ENCODE measurements at regions of chr12 and their contacts with region 1.

Region 1: GRCh38 chr12:53995378-53996239 is 4.4 kb upstream of the HOXC9 start:
- DNase-seq: no peak
- ATAC-seq: peak; percentile 37
- H3K4me3 Mint-ChIP-seq: peak overlapping the region; percentile 82
- H3K27ac Mint-ChIP-seq: no peak overlapping the region
- H3K4me1 Mint-ChIP-seq: peaks cover 34% of the 10 kb centered on the region
- H3K27me3 Mint-ChIP-seq: peaks cover 75% of the 10 kb centered on the region
- CTCF ChIP-seq: no peak

Region 2: DNA sequence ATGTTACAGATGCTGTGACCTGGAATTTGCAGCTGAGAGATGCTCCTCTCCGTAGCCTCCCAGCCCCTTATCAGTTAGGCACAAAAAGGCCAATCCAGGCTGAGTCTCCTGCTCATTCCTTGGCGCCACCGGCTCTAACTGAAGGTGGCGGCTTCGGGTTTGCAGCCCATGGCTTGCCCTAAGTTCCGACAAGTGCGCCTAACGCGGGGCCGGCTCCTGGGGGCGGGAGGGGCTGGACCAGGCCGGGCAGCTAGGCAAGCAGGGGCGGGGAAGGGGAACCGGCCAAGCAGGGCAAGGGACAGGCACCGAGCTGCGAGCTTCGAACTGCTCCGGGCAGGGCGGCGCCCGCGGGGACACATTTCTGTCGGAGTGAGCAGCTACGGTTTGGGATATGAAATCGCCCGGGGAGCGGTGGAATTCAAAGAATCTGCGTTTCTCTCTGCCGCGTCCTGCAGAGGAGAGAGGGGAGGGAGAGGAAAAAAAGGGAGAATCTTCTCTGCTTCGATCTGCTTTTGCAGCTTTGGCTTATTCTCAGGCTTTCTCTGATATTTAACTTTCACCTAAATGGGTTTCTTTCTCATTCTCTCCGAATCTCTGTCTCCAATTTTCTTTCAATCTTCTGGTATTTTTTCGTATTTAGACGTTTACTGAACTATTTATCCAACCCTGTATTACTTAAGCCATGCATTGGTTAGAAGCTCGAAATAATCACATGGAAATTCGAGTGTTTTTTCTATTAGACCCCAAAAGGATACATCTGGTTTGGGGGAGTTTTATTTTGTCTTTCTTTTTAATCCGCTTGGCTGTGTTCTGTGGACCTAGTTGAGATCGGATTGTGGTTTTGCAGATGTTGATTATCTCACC is 42.5 kb before region 1 on chr12:
- CTCF ChIA-PET with region 1: no interaction called
- POLR2A ChIA-PET with region 1: interaction called, 3 read pairs
- intact Hi-C with region 1: loop called (anchors 5 kb)
- DNase-seq: no peak
- ATAC-seq: no peak
- H3K4me3 Mint-ChIP-seq: no peak overlapping the region
- H3K27ac Mint-ChIP-seq: no peak overlapping the region
- H3K4me1 Mint-ChIP-seq: peaks cover 13% of the 10 kb centered on the region
- H3K27me3 Mint-ChIP-seq: peaks cover 71% of the 10 kb centered on the region
- CTCF ChIP-seq: no peak

Region 3: GRCh38 chr12:53974084-53975063 is 21.2 kb before region 1 on chr12 and contains the start of gene HOTAIR:
- CTCF ChIA-PET with region 1: no interaction called
- POLR2A ChIA-PET with region 1: no interaction called
- intact Hi-C with region 1: loop called (anchors 2 kb)
- DNase-seq: no peak
- ATAC-seq: peak; percentile 45
- H3K4me3 Mint-ChIP-seq: peak within 1 kb of the TSS; percentile 66
- H3K27ac Mint-ChIP-seq: peak within 1 kb of the TSS; percentile 50
- H3K4me1 Mint-ChIP-seq: peaks cover 15% of the 10 kb centered on the region
- H3K27me3 Mint-ChIP-seq: peaks cover 71% of the 10 kb centered on the region
- CTCF ChIP-seq: no peak
- total RNA-seq, gene HOTAIR: not detected in 2 replicates

Region 4: DNA sequence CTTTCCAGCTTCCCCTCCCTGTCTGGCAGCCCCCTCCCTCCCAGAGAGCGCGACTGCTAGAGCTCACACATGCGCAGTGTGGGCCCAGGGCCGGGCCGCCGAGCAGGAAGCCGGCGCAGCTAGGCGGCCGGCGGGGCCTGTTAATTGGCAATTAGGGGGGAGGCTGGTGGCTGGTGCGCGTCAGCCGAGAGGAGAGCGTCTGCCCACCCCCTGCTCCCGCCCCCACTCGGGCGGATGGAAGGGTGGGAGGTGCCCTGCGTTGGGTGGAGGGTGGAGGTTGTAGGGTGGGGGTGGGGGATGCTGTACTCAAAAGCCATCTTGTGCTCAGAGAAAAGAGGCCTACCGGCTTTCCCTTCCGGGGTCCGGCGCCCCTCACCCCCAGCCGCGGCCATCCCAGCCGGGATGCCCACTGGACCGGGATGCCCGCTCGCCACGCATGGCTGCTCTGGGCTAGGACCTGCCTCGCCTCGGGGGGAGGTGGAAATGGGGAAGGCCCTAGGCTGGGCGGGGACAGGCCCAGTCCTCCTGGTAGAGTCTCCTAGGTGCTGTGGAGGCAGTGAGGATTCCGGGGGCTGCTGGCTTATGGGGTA is 22.4 kb after region 1 on chr12:
- CTCF ChIA-PET with region 1: no interaction called
- POLR2A ChIA-PET with region 1: interaction called, 4 read pairs
- intact Hi-C with region 1: loop called (anchors 2 kb)
- DNase-seq: peak; percentile 67
- ATAC-seq: peak; percentile 88
- H3K4me3 Mint-ChIP-seq: peak overlapping the region; percentile 84
- H3K27ac Mint-ChIP-seq: peak overlapping the region; percentile 72
- H3K4me1 Mint-ChIP-seq: peaks cover 29% of the 10 kb centered on the region
- H3K27me3 Mint-ChIP-seq: peaks cover 64% of the 10 kb centered on the region
- CTCF ChIP-seq: no peak

Region 5: DNA sequence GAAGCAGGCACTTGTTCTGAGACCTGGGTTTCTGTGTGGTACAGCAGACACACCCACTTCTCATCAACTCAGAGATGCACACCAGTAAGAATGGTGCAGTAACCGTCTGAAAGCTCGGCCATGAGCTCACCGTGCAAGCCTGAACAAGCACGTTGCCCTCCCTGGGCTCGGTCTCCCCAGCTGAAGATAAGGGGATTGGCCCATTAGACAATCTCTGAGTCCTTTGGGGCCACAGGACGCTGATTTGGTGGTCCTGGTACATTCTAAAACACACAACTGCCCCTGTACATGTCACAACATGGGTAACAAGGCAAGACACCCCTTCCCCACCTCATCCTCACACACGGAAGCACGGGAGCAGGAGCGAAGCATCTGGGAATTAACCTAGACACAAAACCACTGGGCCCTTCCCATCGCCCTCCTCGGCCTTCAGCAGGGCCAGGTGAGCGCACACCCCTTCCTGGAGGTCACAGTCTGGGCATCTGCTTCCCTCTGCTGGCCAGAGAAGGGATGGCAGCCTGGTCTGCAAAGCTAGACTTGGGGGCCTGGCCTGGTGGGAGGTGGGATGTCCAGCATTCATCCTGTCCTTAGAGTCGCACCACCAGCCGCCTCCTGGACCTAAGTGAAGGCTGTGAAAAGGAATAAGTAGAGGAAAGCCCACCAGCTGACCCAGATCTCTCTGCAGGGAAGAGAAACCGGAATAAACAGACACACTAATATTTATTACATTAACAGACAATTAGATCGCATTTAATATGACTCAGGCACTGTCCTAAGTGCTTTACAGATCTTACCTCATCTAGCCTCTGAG is 212.1 kb after region 1 on chr12:
- CTCF ChIA-PET with region 1: interaction called, 11 read pairs
- POLR2A ChIA-PET with region 1: no interaction called
- intact Hi-C with region 1: no loop called
- DNase-seq: peak; percentile 79
- ATAC-seq: peak; percentile 100
- H3K4me3 Mint-ChIP-seq: no peak overlapping the region
- H3K27ac Mint-ChIP-seq: peak overlapping the region; percentile 30
- H3K4me1 Mint-ChIP-seq: peaks cover 4% of the 10 kb centered on the region
- H3K27me3 Mint-ChIP-seq: peaks cover 35% of the 10 kb centered on the region
- CTCF ChIP-seq: no peak

Region 6: DNA sequence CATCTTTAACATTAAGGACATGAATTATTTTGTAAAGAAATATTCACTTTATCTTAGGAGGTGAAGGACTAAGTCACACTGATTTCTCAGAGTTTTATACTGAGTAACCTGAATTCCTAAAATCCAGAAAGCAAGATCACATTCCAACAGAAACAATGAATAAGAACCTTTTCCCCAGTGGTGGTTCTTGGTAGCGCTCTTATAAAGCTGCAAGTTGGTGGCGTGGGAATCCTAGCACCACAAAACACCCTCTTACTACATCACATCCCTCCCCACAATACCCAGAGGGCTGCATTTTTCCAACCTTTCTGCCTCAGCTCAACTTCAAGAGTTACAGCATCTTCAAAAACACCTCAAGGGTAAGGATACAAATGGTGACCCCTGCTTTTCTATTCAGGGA is 237.2 kb after region 1 on chr12:
- CTCF ChIA-PET with region 1: no interaction called
- POLR2A ChIA-PET with region 1: no interaction called
- intact Hi-C with region 1: no loop called
- DNase-seq: no peak
- ATAC-seq: no peak
- H3K4me3 Mint-ChIP-seq: no peak overlapping the region
- H3K27ac Mint-ChIP-seq: no peak overlapping the region
- H3K4me1 Mint-ChIP-seq: peaks cover 22% of the 10 kb centered on the region
- H3K27me3 Mint-ChIP-seq: no peaks in the 10 kb centered on the region
- CTCF ChIP-seq: no peak

Measured in activated B cell treated with CpG ODN at 0.5 μM for 24 hours (primary cell).